GM10248 (cell line): ENCODE measurements at regions of chr7 and their contacts with region 1.

Region 1: DNA sequence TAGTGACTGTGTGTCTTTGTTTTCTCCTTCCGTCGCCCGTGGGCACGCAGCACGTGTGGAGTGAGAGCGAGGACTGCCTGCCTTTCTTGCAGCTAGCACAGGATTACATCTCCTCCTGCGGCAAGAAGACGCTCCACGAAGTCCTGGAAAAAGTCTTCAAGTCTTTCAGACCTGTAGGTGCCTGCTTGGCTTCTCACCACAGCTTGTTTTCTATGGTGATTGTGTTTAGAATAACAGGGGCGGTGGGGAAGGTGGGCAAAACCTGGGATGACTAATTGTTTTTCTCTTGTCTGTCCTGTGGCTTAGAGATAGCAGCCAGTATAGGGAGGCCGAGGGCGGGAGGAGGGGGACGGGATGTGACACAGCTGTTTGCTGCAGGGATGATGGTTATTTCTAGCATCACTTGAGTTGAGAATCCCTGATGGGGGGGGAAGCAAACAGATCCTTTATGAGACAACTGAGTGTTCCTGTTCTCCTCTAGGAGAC is 11.4 kb downstream of the MTURN start:
- DNase-seq: no peak
- CTCF ChIP-seq: no peak

Region 2: DNA sequence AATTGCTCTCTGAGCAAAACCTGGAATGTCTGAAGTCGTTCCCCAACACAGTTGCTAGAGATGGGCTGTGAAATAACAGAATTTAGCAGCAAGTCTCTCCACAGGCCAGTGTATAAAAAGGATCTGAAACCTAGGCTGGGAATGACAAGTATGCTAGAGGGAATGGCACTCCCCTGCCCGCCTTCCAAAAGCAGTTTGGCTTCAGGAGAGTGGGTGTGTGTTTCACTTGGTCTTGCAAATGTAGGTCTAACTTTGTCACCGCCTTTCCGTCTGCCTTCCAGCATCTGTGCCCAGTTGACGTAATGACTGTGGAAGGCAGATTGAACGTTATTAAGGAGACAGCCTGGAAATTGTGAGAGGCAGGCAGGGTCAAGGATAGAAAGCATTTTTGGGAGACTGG is 29.4 kb before region 1 on chr7:
- CTCF ChIA-PET with region 1: no interaction called
- POLR2A ChIA-PET with region 1: no interaction called
- DNase-seq: no peak
- CTCF ChIP-seq: no peak

Region 3: GRCh38 chr7:30164567-30164966 is 18.4 kb after region 1 on chr7:
- CTCF ChIA-PET with region 1: interaction called, 12 read pairs
- POLR2A ChIA-PET with region 1: no interaction called
- DNase-seq: peak; percentile 66
- CTCF ChIP-seq: peak; percentile 61